ENCODE measurements at regions of chr1 and their contacts with region 1.

Region 1: GRCh38 chr1:78045926-78046778 is at the start of gene GIPC2:
- DNase-seq: peak; percentile 46
- ATAC-seq: peak; percentile 67 to 82
- total RNA-seq, gene GIPC2: 1.9 to 3.1 TPM

Region 2: DNA sequence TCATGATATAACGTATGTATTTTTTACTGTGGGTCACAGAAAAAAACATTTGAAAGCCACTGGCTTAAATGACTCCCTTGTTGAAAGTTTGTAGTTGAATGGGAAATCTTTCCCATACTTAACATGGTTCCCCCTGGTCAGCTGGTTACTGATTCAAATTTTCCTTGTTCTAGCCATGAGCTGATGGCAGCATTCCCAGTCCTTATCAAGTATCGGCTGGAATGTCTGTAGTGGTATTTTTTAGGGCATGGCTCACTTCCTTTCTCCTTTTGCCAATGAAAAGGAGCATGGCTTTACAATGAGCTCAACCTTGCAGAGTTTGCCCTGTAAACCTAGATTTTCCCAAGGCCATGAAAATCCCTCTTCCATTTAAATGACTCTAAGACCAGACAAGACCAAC is 55.4 kb after region 1 on chr1:
- intact Hi-C with region 1: loop called in 1 of 2 experiments (anchors 5 kb)
- DNase-seq: peak; percentile 50
- ATAC-seq: peak; percentile 88 to 94